ENCODE measurements at regions of chr14 and their contacts with region 1.

Region 1: DNA sequence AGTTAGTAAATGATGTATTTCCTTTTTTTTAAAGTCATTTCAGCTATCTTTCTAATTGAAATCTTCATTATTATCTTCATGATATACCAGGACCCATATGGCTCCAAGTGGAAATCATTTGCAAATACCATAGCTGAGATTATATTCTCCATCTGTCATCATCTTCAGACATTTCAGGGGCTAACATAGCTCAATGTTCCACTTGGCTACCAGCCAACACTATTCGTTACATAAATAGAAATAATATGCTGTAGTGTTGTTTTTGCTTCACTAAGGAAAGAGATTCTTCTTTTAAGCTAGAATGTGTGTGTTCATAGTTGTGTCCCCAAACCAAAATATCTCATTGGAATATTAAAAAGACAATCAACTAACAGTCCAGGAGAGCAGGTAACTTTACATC is 225.1 kb downstream of the DIO2 start:
- DNase-seq: no peak
- H3K4me3 ChIP-seq: no peak overlapping the region
- H3K27ac ChIP-seq: no peak overlapping the region
- H3K4me1 ChIP-seq: no peaks in the 10 kb centered on the region
- H3K27me3 ChIP-seq: no peaks in the 10 kb centered on the region
- CTCF ChIP-seq: no peak
- POLR2A ChIP-seq: no peak

Region 2: DNA sequence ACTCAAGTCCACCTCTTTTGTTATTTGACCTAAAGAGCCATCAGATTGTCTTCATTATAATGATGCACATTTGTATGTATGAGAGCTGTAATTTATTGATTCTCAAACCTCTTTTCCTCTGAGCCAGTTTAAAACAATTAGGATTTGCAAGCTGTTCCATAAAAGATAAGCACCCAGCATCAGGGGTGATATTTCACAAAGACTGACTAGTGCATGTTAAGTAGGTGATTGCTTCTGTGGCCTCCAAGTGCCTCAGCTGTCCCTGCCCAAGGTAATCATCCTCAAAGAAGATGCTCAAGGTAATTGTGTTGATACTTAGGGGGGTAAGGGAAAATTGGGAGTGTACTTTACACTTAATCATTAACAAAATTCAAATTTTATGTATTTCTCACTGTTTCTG is 937.1 kb after region 1 on chr14:
- intact Hi-C with region 1: loop called (anchors 5 kb)
- DNase-seq: no peak
- H3K4me3 ChIP-seq: no peak overlapping the region
- H3K27ac ChIP-seq: no peak overlapping the region
- H3K4me1 ChIP-seq: no peaks in the 10 kb centered on the region
- H3K27me3 ChIP-seq: no peaks in the 10 kb centered on the region
- CTCF ChIP-seq: no peak
- POLR2A ChIP-seq: no peak